ENCODE measurements at regions of chr19 and their contacts with region 1.

Region 1: GRCh38 chr19:40750059-40750873 is at the start of gene ACTMAP:
- DNase-seq: peak; percentile 100
- ATAC-seq: peak; percentile 97
- H3K4me3 ChIP-seq: peak within 1 kb of the TSS; percentile 79 to 95
- H3K27ac ChIP-seq: peak within 1 kb of the TSS; percentile 62 to 82
- H3K4me1 ChIP-seq: no peaks in the 10 kb centered on the region
- H3K27me3 ChIP-seq: no peaks in the 10 kb centered on the region
- total RNA-seq, gene ACTMAP: 4.2 to 6.1 TPM

Region 2: GRCh38 chr19:40519352-40520322 is 230.6 kb before region 1 on chr19:
- intact Hi-C with region 1: no loop called
- DNase-seq: peak in 1 of 2 donors; percentile 76
- ATAC-seq: peak; percentile 40
- H3K4me3 ChIP-seq: no peak overlapping the region
- H3K27ac ChIP-seq: no peak overlapping the region
- H3K4me1 ChIP-seq: no peaks in the 10 kb centered on the region
- H3K27me3 ChIP-seq: no peaks in the 10 kb centered on the region

Region 3: GRCh38 chr19:40570313-40571004 is 179.8 kb before region 1 on chr19:
- intact Hi-C with region 1: no loop called
- DNase-seq: peak; percentile 100
- ATAC-seq: peak; percentile 96
- H3K4me3 ChIP-seq: peak overlapping the region in 1 of 2 donors; percentile 11
- H3K27ac ChIP-seq: no peak overlapping the region
- H3K4me1 ChIP-seq: no peaks in the 10 kb centered on the region
- H3K27me3 ChIP-seq: no peaks in the 10 kb centered on the region

Region 4: GRCh38 chr19:40690693-40691420 is 59.4 kb before region 1 on chr19:
- intact Hi-C with region 1: loop called in 1 of 2 experiments (anchors 2 kb)
- DNase-seq: peak; percentile 96 to 99
- ATAC-seq: peak; percentile 92
- H3K4me3 ChIP-seq: peak overlapping the region; percentile 24 to 62
- H3K27ac ChIP-seq: peak overlapping the region in 1 of 2 donors; percentile 56
- H3K4me1 ChIP-seq: no peaks in the 10 kb centered on the region
- H3K27me3 ChIP-seq: no peaks in the 10 kb centered on the region

Region 5: GRCh38 chr19:40716655-40717324 is 33.5 kb before region 1 on chr19 and contains the starts of genes COQ8B and ITPKC:
- intact Hi-C with region 1: loop called in 1 of 2 experiments (anchors 2 kb)
- DNase-seq: peak; percentile 100
- ATAC-seq: peak; percentile 90
- H3K4me3 ChIP-seq: peak within 1 kb of the TSS; percentile 55 to 84
- H3K27ac ChIP-seq: peak within 1 kb of the TSS; percentile 96 to 98
- H3K4me1 ChIP-seq: no peaks in the 10 kb centered on the region
- H3K27me3 ChIP-seq: no peaks in the 10 kb centered on the region
- total RNA-seq, gene COQ8B: 26.2 to 39.3 TPM
- total RNA-seq, gene ITPKC: 23.9 to 25.7 TPM

Region 6: DNA sequence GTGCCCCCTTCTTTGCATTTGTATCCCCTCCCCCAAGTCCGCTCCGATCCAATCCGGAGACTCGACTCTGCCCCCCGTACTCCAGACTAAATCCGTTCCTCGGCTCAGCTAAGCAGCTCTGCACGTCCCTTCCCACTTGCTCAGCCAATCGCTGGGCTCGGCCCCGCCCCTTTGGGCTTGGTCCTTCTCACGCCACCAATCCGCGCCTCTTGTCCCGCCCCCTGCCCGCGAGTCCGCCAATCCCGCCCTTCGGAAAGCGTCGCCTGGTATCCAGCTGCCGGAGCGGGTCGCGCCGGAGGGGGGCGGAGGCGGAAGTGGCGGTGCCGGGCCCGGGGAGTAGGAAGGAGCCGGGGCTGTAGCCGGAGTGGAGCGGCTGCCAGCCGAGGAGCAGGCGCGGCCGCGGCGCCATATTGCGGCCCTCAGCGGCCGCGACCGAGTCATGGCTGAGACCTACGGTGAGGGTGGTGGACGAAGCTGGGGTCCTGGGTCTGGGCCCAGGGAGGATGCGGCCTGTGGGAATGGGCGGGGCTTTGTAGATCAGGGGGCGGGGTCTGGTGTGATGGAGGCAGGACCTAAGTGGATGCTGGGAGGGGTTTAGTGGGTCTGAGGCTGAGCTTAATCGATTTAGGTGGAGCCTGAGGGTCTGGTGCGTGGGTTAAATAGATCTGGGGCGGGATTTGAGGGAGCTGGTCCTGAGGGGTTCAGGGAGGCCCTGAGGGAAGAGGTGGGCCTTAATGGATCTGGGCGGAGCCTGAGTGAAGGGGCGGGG is 27.9 kb after region 1 on chr19 and contains the start of gene RAB4B:
- intact Hi-C with region 1: loop called (anchors 1 to 2 kb)
- DNase-seq: peak; percentile 100
- ATAC-seq: peak; percentile 99
- H3K4me3 ChIP-seq: peak within 1 kb of the TSS; percentile 50 to 65
- H3K27ac ChIP-seq: peak within 1 kb of the TSS; percentile 52 to 97
- H3K4me1 ChIP-seq: no peaks in the 10 kb centered on the region
- H3K27me3 ChIP-seq: no peaks in the 10 kb centered on the region
- total RNA-seq, gene RAB4B: 28.1 to 33.3 TPM

Region 7: DNA sequence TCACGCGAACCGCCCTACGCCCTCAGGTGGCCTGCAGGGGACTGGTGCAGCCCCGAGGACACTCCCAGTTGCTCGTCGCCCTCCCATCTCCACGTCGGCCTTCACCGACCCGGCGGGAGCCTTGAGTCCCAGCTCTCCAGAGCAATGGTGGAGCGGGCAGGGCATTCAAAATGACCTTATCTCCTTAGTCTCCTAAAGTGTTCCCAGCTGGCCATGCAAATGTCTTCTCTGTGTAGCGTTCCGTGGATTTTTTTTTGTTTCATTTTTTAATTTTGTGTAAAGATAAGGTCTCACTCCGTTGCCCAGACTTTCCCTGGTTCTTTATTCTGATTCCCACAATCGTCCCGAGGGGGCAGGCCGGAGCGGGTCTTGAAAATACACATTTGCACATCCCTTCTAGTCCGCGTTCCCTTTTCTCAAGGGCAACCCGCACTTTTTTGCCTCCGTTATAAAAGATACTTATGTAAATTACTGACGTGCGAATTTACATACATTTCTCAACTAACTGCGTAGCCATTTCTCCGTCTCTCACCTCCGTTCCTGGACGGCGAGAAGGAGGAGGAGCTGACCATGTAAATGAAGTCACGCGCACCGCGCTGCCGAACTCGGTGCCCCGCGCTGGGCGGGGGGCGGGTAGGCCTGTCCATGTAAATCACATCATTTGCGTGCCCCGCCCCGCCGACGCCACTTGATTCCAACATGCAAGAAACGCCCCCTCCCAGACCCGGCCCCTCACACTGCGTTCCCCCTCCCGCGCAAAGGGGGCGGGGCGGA is 48.1 kb after region 1 on chr19:
- intact Hi-C with region 1: loop called (anchors 2 to 5 kb)
- DNase-seq: peak; percentile 100
- ATAC-seq: peak; percentile 94
- H3K4me3 ChIP-seq: peak overlapping the region; percentile 21 to 40
- H3K27ac ChIP-seq: peak overlapping the region; percentile 6 to 81
- H3K4me1 ChIP-seq: no peaks in the 10 kb centered on the region
- H3K27me3 ChIP-seq: no peaks in the 10 kb centered on the region

Region 8: DNA sequence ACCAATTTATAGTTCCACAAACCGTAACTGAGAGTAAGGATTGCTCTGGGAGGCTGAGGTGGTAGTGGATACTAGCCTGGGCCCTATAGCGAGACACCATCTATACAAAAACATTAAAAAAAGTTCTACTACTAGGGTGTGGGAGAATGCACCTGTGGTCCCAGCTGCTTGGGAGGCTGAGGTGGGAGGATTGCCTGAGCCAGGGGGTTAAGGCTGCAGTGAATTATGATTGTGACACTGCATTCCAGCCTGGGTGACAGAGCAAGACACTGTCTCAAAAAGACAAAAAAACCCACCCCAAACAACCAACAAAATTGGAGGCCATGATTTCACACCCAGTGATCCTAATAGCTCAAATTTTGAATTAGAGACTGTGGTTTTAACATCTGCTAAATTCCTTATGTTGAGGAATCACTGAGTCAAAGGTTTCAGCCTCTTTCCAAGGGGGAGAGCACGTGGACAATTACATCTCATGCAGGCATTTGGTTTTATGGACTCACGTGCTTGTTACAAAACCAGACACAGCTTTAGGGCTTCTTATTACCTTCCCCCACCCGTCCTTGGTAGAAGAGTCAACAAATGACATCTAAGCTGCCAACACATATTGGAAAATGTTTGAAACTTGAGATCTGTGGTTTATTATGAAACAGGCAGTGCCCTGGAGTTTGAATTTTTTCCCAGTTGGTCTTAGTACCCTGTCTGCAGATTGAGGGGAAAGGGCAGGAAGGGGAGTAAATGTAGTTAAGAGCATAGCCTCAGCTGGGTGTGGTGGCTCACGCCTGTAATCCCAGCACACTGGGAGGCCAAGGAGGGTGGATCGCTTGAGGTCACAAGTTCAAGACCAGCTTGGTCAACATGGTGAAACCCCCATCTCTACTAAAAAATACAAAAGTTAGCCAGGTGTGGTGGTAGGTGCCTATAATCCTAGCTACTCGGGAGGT is 81.5 kb after region 1 on chr19:
- intact Hi-C with region 1: no loop called
- DNase-seq: no peak
- ATAC-seq: no peak
- H3K4me3 ChIP-seq: no peak overlapping the region
- H3K27ac ChIP-seq: no peak overlapping the region
- H3K4me1 ChIP-seq: no peaks in the 10 kb centered on the region
- H3K27me3 ChIP-seq: no peaks in the 10 kb centered on the region

Region 9: GRCh38 chr19:40862785-40863184 is 112.5 kb after region 1 on chr19:
- intact Hi-C with region 1: no loop called
- DNase-seq: no peak
- ATAC-seq: no peak
- H3K4me3 ChIP-seq: no peak overlapping the region
- H3K27ac ChIP-seq: no peak overlapping the region
- H3K4me1 ChIP-seq: no peaks in the 10 kb centered on the region
- H3K27me3 ChIP-seq: no peaks in the 10 kb centered on the region